Adrenal gland (tissue), 19 donors: ENCODE measurements at regions of chr20 and their contacts with region 1.

Region 1: DNA sequence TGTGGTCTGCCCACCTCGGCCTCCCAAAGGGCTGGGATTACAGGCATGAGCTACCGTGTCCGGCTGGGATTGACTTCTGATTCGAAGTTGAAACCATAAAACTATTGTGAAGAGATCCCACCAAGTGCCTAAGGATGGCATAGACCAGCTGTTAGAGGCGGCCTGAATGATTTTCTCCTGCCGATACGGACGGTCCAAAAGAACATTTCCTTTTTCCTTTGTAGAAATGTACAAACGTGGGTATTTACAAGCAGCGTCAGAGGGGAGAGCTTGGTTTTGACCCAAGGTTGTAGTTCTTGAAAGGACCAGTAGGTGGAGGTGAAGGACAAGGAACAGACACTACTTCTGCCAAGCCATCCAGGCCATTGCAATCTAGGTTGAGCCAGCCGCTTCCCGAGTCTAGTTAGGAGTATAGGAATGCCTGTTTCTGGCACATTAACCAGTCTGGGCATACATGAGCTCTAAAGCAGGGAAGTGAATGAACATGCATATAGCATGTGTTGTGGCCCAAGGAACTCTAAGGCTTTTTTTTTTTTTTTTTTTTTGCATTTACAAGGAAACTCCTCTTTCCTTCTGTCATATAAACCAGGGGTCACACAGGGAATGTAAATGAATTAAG is 29.1 kb downstream of the MOCS3 start:
- DNase-seq: peak; percentile 75 to 86 (median 80)
- H3K4me3 ChIP-seq: no peak overlapping the region
- H3K27ac ChIP-seq: no peak overlapping the region
- H3K4me1 ChIP-seq: no peaks in the 10 kb centered on the region
- H3K27me3 ChIP-seq: peaks cover 17% of the 10 kb centered on the region
- CTCF ChIP-seq: peak; percentile 84 to 95 (median 92)
- POLR2A ChIP-seq: no peak

Region 2: DNA sequence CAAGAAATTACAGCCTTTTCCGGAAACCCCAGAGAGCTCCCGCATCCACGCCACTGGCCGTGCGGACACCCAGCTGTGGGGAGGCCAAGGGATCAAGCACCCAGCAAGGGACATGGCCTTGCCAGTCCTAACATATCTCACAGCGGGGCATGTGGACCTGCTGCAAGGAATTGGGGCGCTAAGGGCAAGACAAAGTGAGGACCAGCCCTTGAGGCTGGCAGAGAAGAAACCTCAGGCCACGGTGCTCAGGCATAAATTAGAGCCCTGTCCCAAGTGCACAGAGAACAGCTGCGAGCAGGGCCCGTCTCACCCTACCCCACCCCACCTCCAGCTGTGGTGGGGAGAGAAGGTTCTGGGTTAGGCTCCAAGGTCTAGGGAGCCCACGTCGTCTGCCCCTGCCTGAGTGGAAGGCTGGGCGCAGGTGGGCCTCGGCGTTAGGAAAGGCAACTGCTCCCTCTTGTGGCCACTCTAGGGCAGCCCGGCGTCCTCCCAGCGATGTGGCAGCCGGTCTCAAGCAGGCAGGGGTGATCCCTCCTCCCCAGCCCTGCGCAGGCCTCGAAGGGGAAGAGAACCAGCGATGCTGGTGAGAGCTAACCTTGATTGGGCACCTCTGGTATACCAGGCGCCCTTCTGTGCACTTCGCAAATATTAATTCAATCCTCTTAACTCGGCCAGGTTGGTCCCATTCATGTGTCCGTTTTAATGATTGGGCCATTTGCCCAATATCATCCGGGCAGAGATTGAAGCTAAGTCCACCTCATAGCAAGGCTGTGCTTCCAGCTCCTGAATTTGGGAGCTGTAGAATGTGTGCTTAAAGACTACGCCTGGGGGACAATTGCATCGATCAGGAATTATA is 319.0 kb after region 1 on chr20:
- intact Hi-C with region 1: loop called (anchors 2 to 5 kb)
- DNase-seq: peak; percentile 44 to 86 (median 74)
- H3K4me3 ChIP-seq: no peak overlapping the region
- H3K27ac ChIP-seq: no peak overlapping the region
- H3K4me1 ChIP-seq: no peaks in the 10 kb centered on the region
- H3K27me3 ChIP-seq: no peaks in the 10 kb centered on the region
- CTCF ChIP-seq: peak; percentile 70 to 89 (median 86)
- POLR2A ChIP-seq: no peak

Region 3: GRCh38 chr20:51326201-51326819 is 338.6 kb after region 1 on chr20:
- intact Hi-C with region 1: loop called in 1 of 2 experiments (anchors 5 kb)
- DNase-seq: peak in 4 of 7 donors; percentile 41 to 69 (median 62)
- H3K4me3 ChIP-seq: no peak overlapping the region
- H3K27ac ChIP-seq: no peak overlapping the region
- H3K4me1 ChIP-seq: no peaks in the 10 kb centered on the region
- H3K27me3 ChIP-seq: no peaks in the 10 kb centered on the region
- CTCF ChIP-seq: peak; percentile 21 to 50 (median 45)
- POLR2A ChIP-seq: no peak

Region 4: GRCh38 chr20:51595058-51595532 is 607.4 kb after region 1 on chr20:
- intact Hi-C with region 1: loop called (anchors 10 kb)
- DNase-seq: peak; percentile 80 to 95 (median 88)
- H3K4me3 ChIP-seq: no peak overlapping the region
- H3K27ac ChIP-seq: no peak overlapping the region
- H3K4me1 ChIP-seq: no peaks in the 10 kb centered on the region
- H3K27me3 ChIP-seq: no peaks in the 10 kb centered on the region
- CTCF ChIP-seq: peak; percentile 65 to 92 (median 90)
- POLR2A ChIP-seq: no peak